Activated T-helper 1 cell treated with anti-CD3 and anti-CD28 coated beads, Interleukin-12 subunit alpha, Interleukin-12 subunit beta, Interleukin-2, Interleukin-4 antibody, amounts not matched to agents 30 ng/mL and 10 ng/mL and 1 ng/mL, durations not matched to agents 14 hours and 24 hours and 36 hours (primary cell): ENCODE measurements at regions of chr16 and their contacts with region 1.

Region 1: GRCh38 chr16:68448360-68448970 is at the start of gene SMPD3:
- DNase-seq: peak; percentile 98
- H3K4me3 Mint-ChIP-seq: peak within 1 kb of the TSS; percentile 72
- H3K27ac Mint-ChIP-seq: peak within 1 kb of the TSS; percentile 3
- H3K4me1 Mint-ChIP-seq: peaks cover 5% of the 10 kb centered on the region
- H3K27me3 Mint-ChIP-seq: peaks cover 35% of the 10 kb centered on the region
- total RNA-seq, gene SMPD3: 0.49 and 0.61 TPM in 2 replicates

Region 2: DNA sequence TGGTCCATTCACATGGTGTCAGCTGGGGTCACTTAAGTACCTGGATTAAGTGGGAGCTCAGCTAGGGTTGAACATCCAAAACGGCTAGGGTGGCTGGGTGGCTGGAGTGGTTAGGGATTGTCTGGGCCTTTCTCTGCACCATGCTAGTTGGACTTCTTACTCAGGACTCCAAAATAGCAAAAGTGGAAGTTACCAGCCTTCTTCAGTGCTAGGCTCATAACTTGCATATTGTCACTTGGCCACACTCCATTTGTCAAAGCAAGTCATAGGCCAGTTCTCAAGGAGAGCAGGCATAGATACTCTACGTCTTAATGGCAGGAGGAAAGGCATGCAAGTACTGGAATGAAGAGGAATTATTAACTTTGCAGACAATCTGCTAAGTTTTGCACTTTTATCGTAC is 282.2 kb before region 1 on chr16:
- intact Hi-C with region 1: no loop called
- DNase-seq: no peak
- H3K4me3 Mint-ChIP-seq: no peak overlapping the region
- H3K27ac Mint-ChIP-seq: no peak overlapping the region
- H3K4me1 Mint-ChIP-seq: no peaks in the 10 kb centered on the region
- H3K27me3 Mint-ChIP-seq: no peaks in the 10 kb centered on the region

Region 3: GRCh38 chr16:68200088-68200783 is 248.2 kb before region 1 on chr16:
- intact Hi-C with region 1: no loop called
- DNase-seq: no peak
- H3K4me3 Mint-ChIP-seq: no peak overlapping the region
- H3K27ac Mint-ChIP-seq: peak overlapping the region; percentile 56
- H3K4me1 Mint-ChIP-seq: peaks cover 8% of the 10 kb centered on the region
- H3K27me3 Mint-ChIP-seq: no peaks in the 10 kb centered on the region

Region 4: GRCh38 chr16:68244903-68245853 is 203.3 kb before region 1 on chr16 and contains the start of gene PLA2G15:
- intact Hi-C with region 1: loop called (anchors 1 kb)
- DNase-seq: peak; percentile 93
- H3K4me3 Mint-ChIP-seq: peak within 1 kb of the TSS; percentile 99
- H3K27ac Mint-ChIP-seq: peak within 1 kb of the TSS; percentile 82
- H3K4me1 Mint-ChIP-seq: peaks cover 18% of the 10 kb centered on the region
- H3K27me3 Mint-ChIP-seq: peaks cover 5% of the 10 kb centered on the region
- total RNA-seq, gene PLA2G15: 8.6 and 8.8 TPM in 2 replicates

Region 5: GRCh38 chr16:68367030-68367429 is 81.4 kb before region 1 on chr16:
- intact Hi-C with region 1: loop called (anchors 5 kb)
- DNase-seq: peak; percentile 22
- H3K4me3 Mint-ChIP-seq: no peak overlapping the region
- H3K27ac Mint-ChIP-seq: no peak overlapping the region
- H3K4me1 Mint-ChIP-seq: peaks cover 42% of the 10 kb centered on the region
- H3K27me3 Mint-ChIP-seq: peaks cover 30% of the 10 kb centered on the region

Region 6: GRCh38 chr16:68469796-68470460 is 21.5 kb after region 1 on chr16:
- intact Hi-C with region 1: loop called (anchors 2 kb)
- DNase-seq: no peak
- H3K4me3 Mint-ChIP-seq: peak overlapping the region; percentile 75
- H3K27ac Mint-ChIP-seq: peak overlapping the region; percentile 68
- H3K4me1 Mint-ChIP-seq: peaks cover 53% of the 10 kb centered on the region
- H3K27me3 Mint-ChIP-seq: peaks cover 10% of the 10 kb centered on the region

Region 7: GRCh38 chr16:68520649-68521086 is 72.2 kb after region 1 on chr16:
- intact Hi-C with region 1: loop called (anchors 1 kb)
- DNase-seq: peak; percentile 82
- H3K4me3 Mint-ChIP-seq: no peak overlapping the region
- H3K27ac Mint-ChIP-seq: no peak overlapping the region
- H3K4me1 Mint-ChIP-seq: peaks cover 9% of the 10 kb centered on the region
- H3K27me3 Mint-ChIP-seq: no peaks in the 10 kb centered on the region